ENCODE measurements at regions of chr14 and their contacts with region 1.

Region 1: GRCh38 chr14:61178226-61179060 is 102.7 kb downstream of the TMEM30B start:
- DNase-seq: peak; percentile 80 to 95
- H3K4me3 ChIP-seq: peak overlapping the region; percentile 50
- H3K27ac ChIP-seq: peak overlapping the region; percentile 98
- H3K4me1 ChIP-seq: peaks cover 47% of the 10 kb centered on the region
- H3K27me3 ChIP-seq: no peaks in the 10 kb centered on the region
- CTCF ChIP-seq: peak; percentile 16; the same call in 1 of the 2 replicates

Region 2: GRCh38 chr14:60648934-60649874 is 529.2 kb before region 1 on chr14 and contains the start of gene SIX1:
- CTCF ChIA-PET with region 1: interaction called, 10 read pairs
- POLR2A ChIA-PET with region 1: interaction called, 30 read pairs
- intact Hi-C with region 1: loop called (anchors 5 kb)
- DNase-seq: peak; percentile 82 to 90
- H3K4me3 ChIP-seq: peak within 1 kb of the TSS; percentile 88
- H3K27ac ChIP-seq: 0 out of 2 replicates have a peak within 1 kb of the TSS, but pooled peaks have one; percentile 28
- H3K4me1 ChIP-seq: peaks cover 19% of the 10 kb centered on the region
- H3K27me3 ChIP-seq: no peaks in the 10 kb centered on the region
- CTCF ChIP-seq: no peak
- total RNA-seq, gene SIX1: 8.1 and 9.4 TPM in 2 replicates

Region 3: DNA sequence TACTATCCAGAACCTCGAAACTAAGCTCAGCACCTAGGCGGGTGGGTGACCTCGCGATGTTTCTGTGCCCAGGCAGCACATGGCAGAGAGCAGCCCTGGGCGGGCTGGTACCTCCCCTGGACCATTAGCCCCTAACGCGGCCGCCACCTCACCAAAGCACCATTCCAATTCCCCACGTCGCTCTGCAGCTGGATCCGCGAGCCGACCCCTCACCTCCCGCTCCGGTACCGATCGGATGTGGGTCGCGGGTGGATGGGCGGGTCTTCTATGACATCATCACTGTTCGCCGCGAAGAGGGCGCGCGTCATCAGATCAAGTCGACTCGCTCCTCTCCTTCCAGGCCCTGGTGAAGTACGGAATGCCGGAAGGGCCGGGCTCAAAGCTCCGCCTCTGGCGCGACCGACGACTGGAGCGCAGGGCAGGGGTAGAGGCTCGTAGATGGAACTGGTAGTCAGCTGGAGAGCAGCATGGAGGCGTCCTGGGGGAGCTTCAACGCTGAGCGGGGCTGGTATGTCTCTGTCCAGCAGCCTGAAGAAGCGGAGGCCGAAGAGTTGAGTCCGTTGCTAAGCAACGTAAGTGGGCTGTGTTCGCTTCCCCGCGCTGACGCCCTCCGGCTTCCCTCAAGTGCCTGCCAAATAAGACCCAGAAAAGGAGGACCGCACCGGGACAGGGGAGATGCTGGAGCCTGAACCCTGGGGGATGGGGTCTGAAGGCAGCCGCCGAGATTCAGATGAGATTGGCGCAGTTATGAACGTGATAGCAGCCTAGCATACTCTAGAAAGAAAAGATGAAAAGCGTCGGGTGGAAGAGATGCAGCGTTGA is 197.4 kb before region 1 on chr14 and contains the starts of genes SLC38A6 and TRMT5:
- CTCF ChIA-PET with region 1: no interaction called
- POLR2A ChIA-PET with region 1: no interaction called
- intact Hi-C with region 1: loop called (anchors 2 kb)
- DNase-seq: peak; percentile 92 to 95
- H3K4me3 ChIP-seq: peak within 1 kb of the TSS; percentile 99
- H3K27ac ChIP-seq: peak within 1 kb of the TSS; percentile 78
- H3K4me1 ChIP-seq: peaks cover 36% of the 10 kb centered on the region
- H3K27me3 ChIP-seq: no peaks in the 10 kb centered on the region
- CTCF ChIP-seq: no peak
- total RNA-seq, gene SLC38A6: 44.7 and 45.5 TPM in 2 replicates
- total RNA-seq, gene TRMT5: 17.3 and 17.6 TPM in 2 replicates

Region 4: GRCh38 chr14:61034416-61035120 is 143.9 kb before region 1 on chr14:
- CTCF ChIA-PET with region 1: interaction called, 3 read pairs
- POLR2A ChIA-PET with region 1: interaction called, 10 read pairs
- intact Hi-C with region 1: no loop called
- DNase-seq: peak in 1 of 2 experiments; percentile 21
- H3K4me3 ChIP-seq: no peak overlapping the region
- H3K27ac ChIP-seq: no peak overlapping the region
- H3K4me1 ChIP-seq: no peaks in the 10 kb centered on the region
- H3K27me3 ChIP-seq: no peaks in the 10 kb centered on the region
- CTCF ChIP-seq: no peak

Region 5: DNA sequence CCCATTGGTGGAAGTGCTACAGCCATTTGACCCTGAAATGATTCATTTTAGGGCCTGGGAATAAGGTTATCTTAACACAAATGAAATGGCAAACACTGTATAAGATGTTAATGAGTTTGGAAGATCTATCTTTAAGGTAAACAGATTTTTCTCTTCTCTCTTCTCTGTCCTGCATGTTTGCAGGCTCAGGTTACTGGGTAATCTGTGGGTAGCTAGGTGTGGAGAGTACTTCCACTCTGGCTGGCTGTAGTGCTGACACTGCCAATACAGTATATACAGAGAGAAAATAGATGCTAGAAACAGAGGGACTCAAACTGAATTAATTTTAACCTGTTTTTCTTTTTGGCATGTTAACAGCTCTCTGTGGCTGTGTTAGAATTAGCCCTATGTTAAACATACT is 112.8 kb before region 1 on chr14:
- CTCF ChIA-PET with region 1: no interaction called
- POLR2A ChIA-PET with region 1: interaction called, 12 read pairs
- intact Hi-C with region 1: no loop called
- DNase-seq: no peak
- H3K4me3 ChIP-seq: no peak overlapping the region
- H3K27ac ChIP-seq: no peak overlapping the region
- H3K4me1 ChIP-seq: no peaks in the 10 kb centered on the region
- H3K27me3 ChIP-seq: no peaks in the 10 kb centered on the region
- CTCF ChIP-seq: no peak

Region 6: GRCh38 chr14:61103481-61104339 is 74.7 kb before region 1 on chr14:
- CTCF ChIA-PET with region 1: interaction called, 9 read pairs
- POLR2A ChIA-PET with region 1: interaction called, 9 read pairs
- intact Hi-C with region 1: loop called (anchors 1 kb)
- DNase-seq: peak; percentile 85 to 89
- H3K4me3 ChIP-seq: 0 out of 2 replicates have a peak overlapping the region, but pooled peaks have one; percentile 1
- H3K27ac ChIP-seq: peak overlapping the region; percentile 98
- H3K4me1 ChIP-seq: peaks cover 37% of the 10 kb centered on the region
- H3K27me3 ChIP-seq: no peaks in the 10 kb centered on the region
- CTCF ChIP-seq: no peak

Region 7: DNA sequence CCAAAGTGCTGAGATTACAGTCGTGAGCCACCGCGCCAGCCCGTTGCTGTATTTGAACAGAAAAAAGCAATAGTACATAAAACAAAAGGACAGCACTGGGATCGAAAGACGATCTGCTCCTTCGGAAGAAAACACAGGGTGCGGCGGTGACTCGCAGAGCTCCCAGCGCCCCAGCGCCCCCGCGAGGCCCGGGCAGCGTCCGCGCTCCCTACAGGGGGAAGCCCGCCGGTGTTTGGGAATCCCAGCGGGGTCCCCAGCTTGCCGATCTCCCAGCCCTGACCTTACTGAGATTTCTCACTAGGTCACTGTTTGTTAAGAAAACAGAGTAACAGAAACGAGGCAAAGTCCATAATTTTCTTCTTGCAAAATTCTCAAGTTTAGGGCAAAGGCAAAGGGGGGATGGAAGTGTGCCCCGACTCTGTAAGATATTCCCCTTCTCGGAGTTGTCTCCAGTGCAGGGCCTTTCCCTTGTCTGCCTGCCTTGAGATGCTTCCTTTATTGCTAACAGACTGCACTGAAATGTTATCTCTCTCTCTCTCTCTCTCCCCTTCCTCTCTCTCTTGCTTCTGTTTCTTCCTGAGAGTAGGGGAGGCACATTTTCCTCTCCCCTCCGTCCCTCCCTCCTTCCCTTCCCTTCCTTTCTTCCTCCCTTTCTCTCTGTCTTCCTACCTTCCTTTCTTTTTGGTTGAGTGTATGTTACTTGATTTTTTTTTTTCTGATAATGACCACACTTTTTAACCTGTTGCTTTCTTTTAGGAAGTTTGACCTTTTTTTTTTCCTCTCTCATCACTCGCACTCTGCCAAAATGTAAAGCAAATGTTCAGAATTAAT is 10.8 kb after region 1 on chr14:
- CTCF ChIA-PET with region 1: no interaction called
- POLR2A ChIA-PET with region 1: no interaction called
- intact Hi-C with region 1: loop called (anchors 1 kb)
- DNase-seq: peak; percentile 68 to 84
- H3K4me3 ChIP-seq: peak overlapping the region; percentile 68
- H3K27ac ChIP-seq: no peak overlapping the region
- H3K4me1 ChIP-seq: no peaks in the 10 kb centered on the region; the same call in 1 of the 2 replicates
- H3K27me3 ChIP-seq: no peaks in the 10 kb centered on the region
- CTCF ChIP-seq: peak; percentile 75

Measured in PC-9 (cell line).